Mucosa of descending colon (tissue), 3 donors: ENCODE measurements at regions of chr12 and their contacts with region 1.

Region 1: DNA sequence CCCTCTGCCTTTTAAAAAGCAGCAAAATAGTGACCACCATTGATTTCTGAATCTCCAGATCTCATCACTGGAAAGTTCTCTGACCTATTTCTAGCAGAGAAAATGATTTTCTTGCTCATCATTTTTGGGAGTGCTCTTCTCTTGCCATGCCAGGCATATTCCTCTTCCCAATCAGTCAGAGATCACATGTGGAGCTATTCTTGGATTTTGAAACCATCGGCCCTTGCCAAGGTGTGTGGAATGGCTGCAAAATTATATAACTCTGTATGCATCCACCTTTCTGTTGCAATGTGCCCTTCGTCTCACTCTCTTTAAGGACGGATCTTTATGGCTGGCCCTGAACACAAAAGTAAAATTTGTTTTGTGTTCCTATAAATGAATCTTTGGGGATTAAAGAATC is 25.5 kb upstream of the LDHB start:
- DNase-seq: no peak
- ATAC-seq: no peak
- H3K4me3 ChIP-seq: no peak overlapping the region
- H3K4me1 ChIP-seq: no peaks in the 10 kb centered on the region
- CTCF ChIP-seq: no peak

Region 2: DNA sequence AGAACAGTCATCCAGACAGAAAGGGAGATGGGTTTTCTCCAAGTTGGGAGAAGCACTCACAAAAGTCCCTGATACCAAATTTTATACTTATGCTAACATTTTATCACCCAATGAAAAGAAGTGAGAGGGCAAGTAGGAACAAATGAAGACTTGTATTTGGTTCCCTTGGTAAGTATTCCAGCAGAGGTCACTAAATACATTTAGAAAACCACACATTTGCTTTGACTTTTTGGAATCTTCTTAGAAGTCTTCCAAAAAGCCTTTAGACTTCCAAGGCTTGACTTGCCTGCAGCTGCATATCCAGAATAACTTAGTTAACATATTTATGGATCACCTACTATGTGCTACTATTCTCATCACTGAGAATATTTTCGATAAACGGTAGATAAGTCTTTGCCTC is 75.4 kb before region 1 on chr12:
- intact Hi-C with region 1: loop called in 1 of 2 experiments (anchors 5 kb)
- DNase-seq: no peak
- ATAC-seq: no peak
- H3K4me3 ChIP-seq: no peak overlapping the region
- H3K4me1 ChIP-seq: no peaks in the 10 kb centered on the region
- CTCF ChIP-seq: no peak